Dorsolateral prefrontal cortex (tissue), 120 donors: ENCODE measurements at regions of chr17 and their contacts with region 1.

Region 1: GRCh38 chr17:5877948-5878347 is 192.2 kb upstream of the WSCD1 start:
- DNase-seq: peak; percentile 46 to 95 (median 85)
- H3K4me3 ChIP-seq: peak overlapping the region in 9 of 59 donors; percentile 5 to 31 (median 15)
- H3K27ac ChIP-seq: peak overlapping the region in 53 of 59 donors; percentile 7 to 86 (median 67)
- H3K27me3 ChIP-seq: peaks cover 0 to 4% (median 0%) of the 10 kb centered on the region in 45 donors
- CTCF ChIP-seq: peak in 12 of 56 donors; percentile 13 to 41 (median 22)

Region 2: DNA sequence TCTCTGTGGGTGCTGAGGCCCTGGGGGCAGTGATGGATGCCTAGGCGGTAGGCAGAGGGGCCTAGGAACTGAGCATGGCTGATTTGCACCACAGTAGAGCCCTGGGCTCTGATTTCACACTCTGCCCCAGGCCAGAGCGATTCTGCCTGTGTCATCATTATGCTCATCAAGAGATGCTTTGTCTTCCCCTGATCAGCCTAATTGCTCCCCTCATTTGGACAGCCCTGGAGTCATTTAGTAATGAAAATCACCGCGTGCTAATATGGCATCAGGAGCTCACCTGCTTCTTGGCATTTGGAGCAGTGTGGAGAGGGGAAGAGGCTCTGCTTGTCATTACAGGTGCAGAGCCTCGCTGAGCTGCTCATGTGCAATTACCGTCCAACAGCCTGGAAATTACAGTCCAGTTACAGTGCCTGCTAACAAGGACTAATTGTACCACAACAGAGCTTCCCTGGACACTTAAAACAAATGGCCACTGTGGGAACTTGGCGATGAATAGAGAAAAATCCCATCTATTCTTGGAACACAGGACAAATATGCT is 35.1 kb after region 1 on chr17:
- intact Hi-C with region 1: loop called in 1 of 2 experiments (anchors 1 kb)
- DNase-seq: peak in 4 of 10 donors; percentile 9 to 61 (median 32)
- H3K4me3 ChIP-seq: no peak overlapping the region
- H3K27ac ChIP-seq: peak overlapping the region in 58 of 59 donors; percentile 27 to 96 (median 85)
- H3K27me3 ChIP-seq: peaks cover 0 to 5% (median 0%) of the 10 kb centered on the region in 45 donors
- CTCF ChIP-seq: peak in 3 of 56 donors; percentile 11 to 18 (median 16)

Region 3: GRCh38 chr17:6212766-6213165 is 334.8 kb after region 1 on chr17:
- intact Hi-C with region 1: no loop called
- DNase-seq: no peak
- H3K4me3 ChIP-seq: no peak overlapping the region
- H3K27ac ChIP-seq: no peak overlapping the region
- H3K27me3 ChIP-seq: peaks cover 0 to 25% (median 3%) of the 10 kb centered on the region in 45 donors
- CTCF ChIP-seq: no peak